PC-9 (cell line): ENCODE measurements at regions of chr14 and their contacts with region 1.

Region 1: GRCh38 chr14:55430024-55430690 is 10.3 kb downstream of the TBPL2 start:
- DNase-seq: peak; percentile 70 to 91
- H3K4me3 ChIP-seq: no peak overlapping the region
- H3K27ac ChIP-seq: peak overlapping the region; percentile 37; the same call in 1 of the 2 replicates
- H3K4me1 ChIP-seq: peaks cover 29% of the 10 kb centered on the region
- H3K27me3 ChIP-seq: no peaks in the 10 kb centered on the region
- CTCF ChIP-seq: peak; percentile 64

Region 2: GRCh38 chr14:55191203-55192053 is 238.7 kb before region 1 on chr14 and contains the start of gene DLGAP5:
- CTCF ChIA-PET with region 1: no interaction called
- POLR2A ChIA-PET with region 1: no interaction called
- intact Hi-C with region 1: loop called (anchors 2 kb)
- DNase-seq: peak; percentile 92 to 94
- H3K4me3 ChIP-seq: peak within 1 kb of the TSS; percentile 79
- H3K27ac ChIP-seq: no peak within 1 kb of the TSS
- H3K4me1 ChIP-seq: peaks cover 18% of the 10 kb centered on the region
- H3K27me3 ChIP-seq: no peaks in the 10 kb centered on the region
- CTCF ChIP-seq: no peak
- total RNA-seq, gene DLGAP5: 51.7 and 80.0 TPM in 2 replicates

Region 3: GRCh38 chr14:55270832-55271565 is 159.2 kb before region 1 on chr14 and contains the start of gene FBXO34:
- CTCF ChIA-PET with region 1: interaction called, 17 read pairs
- POLR2A ChIA-PET with region 1: no interaction called
- intact Hi-C with region 1: loop called (anchors 1 kb)
- DNase-seq: peak; percentile 86 to 99
- H3K4me3 ChIP-seq: peak within 1 kb of the TSS; percentile 98
- H3K27ac ChIP-seq: peak within 1 kb of the TSS; percentile 71
- H3K4me1 ChIP-seq: peaks cover 37% of the 10 kb centered on the region
- H3K27me3 ChIP-seq: no peaks in the 10 kb centered on the region
- CTCF ChIP-seq: peak; percentile 94
- total RNA-seq, gene FBXO34: 32.8 and 33.1 TPM in 2 replicates

Region 4: DNA sequence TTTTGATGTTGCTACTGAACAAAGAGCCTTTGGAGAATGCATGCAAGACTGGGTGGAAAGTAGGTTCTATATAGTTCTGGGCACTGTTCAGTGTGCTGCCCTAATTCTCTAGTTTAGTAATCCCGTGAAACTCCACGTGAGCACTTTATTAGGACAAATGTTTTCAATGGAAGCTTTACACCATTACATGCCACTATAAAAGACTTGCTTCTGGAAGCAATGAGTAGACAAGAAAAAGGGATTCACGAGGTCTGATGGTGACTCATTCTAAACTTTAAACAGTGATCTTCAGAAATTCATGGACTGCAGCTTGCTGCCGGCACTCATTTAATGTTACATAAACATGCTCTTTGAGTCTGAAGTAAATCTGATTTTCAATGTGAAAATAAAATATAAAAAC is 40.8 kb before region 1 on chr14:
- CTCF ChIA-PET with region 1: no interaction called
- POLR2A ChIA-PET with region 1: interaction called, 6 read pairs
- intact Hi-C with region 1: loop called (anchors 1 kb)
- DNase-seq: no peak
- H3K4me3 ChIP-seq: no peak overlapping the region
- H3K27ac ChIP-seq: no peak overlapping the region
- H3K4me1 ChIP-seq: 0 out of 2 replicates have a peak, but pooled peaks cover 6% of the 10 kb centered on the region
- H3K27me3 ChIP-seq: no peaks in the 10 kb centered on the region
- CTCF ChIP-seq: no peak

Region 5: GRCh38 chr14:55519473-55520060 is 89.4 kb after region 1 on chr14:
- CTCF ChIA-PET with region 1: no interaction called
- POLR2A ChIA-PET with region 1: interaction called, 20 read pairs
- intact Hi-C with region 1: no loop called
- DNase-seq: no peak
- H3K4me3 ChIP-seq: no peak overlapping the region
- H3K27ac ChIP-seq: no peak overlapping the region
- H3K4me1 ChIP-seq: no peaks in the 10 kb centered on the region
- H3K27me3 ChIP-seq: no peaks in the 10 kb centered on the region
- CTCF ChIP-seq: no peak